Mammary epithelial cell (primary cell): ENCODE measurements at regions of chr10 and their contacts with region 1.

Region 1: DNA sequence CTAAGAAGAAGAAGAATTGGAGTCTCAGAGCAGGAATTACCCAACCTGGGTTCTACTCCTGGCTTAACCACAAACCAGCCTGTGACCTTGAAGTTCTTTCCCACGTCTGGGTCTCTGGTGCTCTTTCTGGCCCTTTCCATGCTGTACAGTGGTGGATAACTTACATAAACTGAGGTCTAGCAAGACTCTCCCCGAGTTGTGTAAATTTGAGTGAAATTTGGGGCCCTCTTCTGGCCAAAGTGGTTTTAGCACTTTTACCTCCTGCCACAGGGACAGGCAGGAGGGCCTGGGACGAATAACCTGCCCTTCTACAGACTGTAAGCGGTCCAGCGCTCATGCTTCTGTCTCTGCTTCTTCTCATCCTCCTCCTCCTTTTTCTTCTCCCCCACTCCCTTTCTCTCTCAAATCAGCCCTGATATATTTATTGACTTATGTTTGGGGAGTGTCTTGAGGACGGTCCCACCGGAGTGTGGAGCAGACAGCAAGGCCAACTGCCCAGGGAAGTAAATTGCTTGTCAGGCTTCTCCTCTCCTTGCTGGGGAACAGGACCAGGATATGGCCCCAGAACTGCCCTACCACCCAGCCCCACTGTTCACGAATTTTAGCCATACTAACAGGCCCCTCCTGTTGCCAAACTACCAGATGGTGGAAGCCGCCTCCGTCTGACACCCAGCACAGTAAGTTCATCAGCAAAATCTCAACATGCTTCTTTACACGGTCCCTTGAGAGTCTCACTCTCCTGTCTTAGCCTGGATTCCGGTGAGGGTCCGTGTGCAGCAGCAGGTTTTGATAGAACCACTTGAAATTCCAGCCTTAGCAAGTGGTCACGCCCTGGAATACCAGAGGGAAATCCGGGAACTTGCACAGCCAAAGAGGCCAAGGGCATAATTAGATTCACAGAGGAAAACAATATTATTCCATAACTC is 4.0 kb upstream of the SH3PXD2A start:
- DNase-seq: peak; percentile 69
- H3K4me3 ChIP-seq: no peak overlapping the region
- H3K27ac ChIP-seq: peak overlapping the region; percentile 22
- H3K4me1 ChIP-seq: peaks cover 45% of the 10 kb centered on the region
- H3K27me3 ChIP-seq: no peaks in the 10 kb centered on the region
- CTCF ChIP-seq: peak; percentile 64 to 69

Region 2: DNA sequence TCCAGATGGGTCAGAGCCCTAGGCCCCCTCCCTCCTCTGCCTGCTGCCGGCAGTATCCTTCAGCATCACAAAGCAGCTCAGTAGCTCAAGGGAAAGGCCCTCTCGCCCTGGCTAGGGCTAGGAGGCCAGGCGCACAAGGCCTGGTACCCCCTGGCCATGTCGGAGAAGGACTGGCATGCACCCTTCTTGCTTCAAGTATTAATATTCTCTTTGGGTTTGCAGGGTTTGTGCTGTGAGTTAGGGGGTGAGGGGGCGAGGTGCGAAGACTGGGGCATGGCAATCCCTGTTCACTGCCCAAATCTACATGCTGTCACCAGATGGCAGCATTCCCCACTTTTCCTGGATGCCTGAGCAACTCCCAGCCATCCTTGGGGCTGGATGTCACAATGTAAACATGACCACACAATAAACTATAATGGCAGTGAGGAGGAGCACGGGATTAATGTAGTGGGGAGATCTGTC is 260.7 kb before region 1 on chr10:
- CTCF ChIA-PET with region 1: no interaction called
- dilution Hi-C with region 1: no loop called
- in situ Hi-C with region 1: no loop called
- intact Hi-C with region 1: loop called (anchors 1 kb)
- DNase-seq: peak; percentile 32
- H3K4me3 ChIP-seq: no peak overlapping the region
- H3K27ac ChIP-seq: no peak overlapping the region
- H3K4me1 ChIP-seq: no peaks in the 10 kb centered on the region
- H3K27me3 ChIP-seq: no peaks in the 10 kb centered on the region
- CTCF ChIP-seq: peak; percentile 40 to 59

Region 3: GRCh38 chr10:103696411-103697145 is 162.8 kb before region 1 on chr10:
- CTCF ChIA-PET with region 1: no interaction called
- dilution Hi-C with region 1: no loop called
- in situ Hi-C with region 1: no loop called
- intact Hi-C with region 1: no loop called
- DNase-seq: peak; percentile 93
- H3K4me3 ChIP-seq: no peak overlapping the region
- H3K27ac ChIP-seq: peak overlapping the region; percentile 41
- H3K4me1 ChIP-seq: peaks cover 62% of the 10 kb centered on the region
- H3K27me3 ChIP-seq: no peaks in the 10 kb centered on the region
- CTCF ChIP-seq: peak; percentile 32 to 41

Region 4: DNA sequence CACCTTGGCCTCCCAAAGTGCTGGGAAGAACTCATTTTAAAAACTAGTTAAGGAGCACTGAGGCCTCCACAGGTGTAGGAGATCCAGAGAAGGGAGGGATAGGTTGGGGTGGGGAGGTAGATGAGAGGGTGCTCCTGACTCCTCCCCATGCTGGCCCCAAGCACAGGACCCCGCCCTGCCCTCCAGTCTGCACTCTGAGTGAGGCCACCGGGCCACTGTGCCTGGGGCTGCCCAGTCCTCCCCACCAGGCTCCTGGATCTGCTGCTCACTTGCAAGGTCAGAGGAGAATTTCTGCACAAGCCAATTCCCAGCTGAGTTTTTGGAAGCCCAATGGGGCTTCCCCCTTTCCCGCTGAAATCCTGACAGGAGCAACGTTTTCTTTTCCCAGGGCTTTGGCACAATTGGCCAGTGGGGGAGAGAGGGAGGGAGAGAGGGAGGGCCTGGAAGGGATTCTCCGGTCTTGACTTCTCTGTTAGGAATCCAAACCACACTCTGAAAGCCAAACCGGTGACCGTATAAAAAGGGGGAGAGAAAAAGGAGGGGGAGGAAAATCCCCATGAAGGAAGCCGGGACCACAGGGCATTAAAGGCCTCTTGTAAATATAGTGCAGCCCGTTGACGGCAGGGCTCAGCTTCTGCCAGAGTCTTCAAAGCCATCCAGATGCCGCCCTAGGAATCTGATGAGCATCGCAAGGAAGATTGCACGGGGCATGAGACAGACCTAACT is 120.2 kb before region 1 on chr10:
- CTCF ChIA-PET with region 1: interaction called, 5 read pairs
- dilution Hi-C with region 1: loop called (anchors 25 kb)
- in situ Hi-C with region 1: no loop called
- intact Hi-C with region 1: no loop called
- DNase-seq: peak; percentile 92
- H3K4me3 ChIP-seq: no peak overlapping the region
- H3K27ac ChIP-seq: peak overlapping the region; percentile 61
- H3K4me1 ChIP-seq: peaks cover 76% of the 10 kb centered on the region
- H3K27me3 ChIP-seq: no peaks in the 10 kb centered on the region
- CTCF ChIP-seq: no peak

Region 5: DNA sequence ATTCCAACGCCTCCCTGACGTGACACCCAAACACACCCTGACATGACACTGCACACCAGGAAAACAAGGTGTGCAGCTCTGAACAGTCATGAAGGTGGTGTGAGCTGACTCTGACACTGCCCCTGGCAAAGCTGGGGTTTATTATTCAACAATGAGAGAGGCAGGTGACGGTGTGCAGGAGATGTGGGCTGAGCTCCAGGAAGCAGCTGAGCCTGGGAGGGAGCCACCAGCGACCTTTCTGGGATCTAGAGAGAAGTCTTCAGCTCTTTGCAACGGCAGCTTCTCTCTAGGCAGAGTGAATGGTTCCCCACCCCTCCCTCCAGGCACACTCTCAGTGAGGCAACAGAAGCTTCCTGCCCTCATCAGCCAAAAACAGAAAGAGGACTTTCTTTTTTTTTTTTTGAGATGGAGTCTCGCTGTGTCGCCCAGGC is 69.6 kb before region 1 on chr10:
- CTCF ChIA-PET with region 1: no interaction called
- dilution Hi-C with region 1: no loop called
- in situ Hi-C with region 1: loop called in 1 of 2 experiments (anchors 5 kb)
- intact Hi-C with region 1: no loop called
- DNase-seq: peak; percentile 65
- H3K4me3 ChIP-seq: no peak overlapping the region
- H3K27ac ChIP-seq: peak overlapping the region; percentile 68
- H3K4me1 ChIP-seq: peaks cover 68% of the 10 kb centered on the region
- H3K27me3 ChIP-seq: no peaks in the 10 kb centered on the region
- CTCF ChIP-seq: no peak

Region 6: GRCh38 chr10:103870516-103870915 is 11.1 kb after region 1 on chr10:
- CTCF ChIA-PET with region 1: no interaction called
- dilution Hi-C with region 1: no loop called
- in situ Hi-C with region 1: no loop called
- intact Hi-C with region 1: loop called (anchors 1 kb)
- DNase-seq: peak; percentile 95
- H3K4me3 ChIP-seq: peak overlapping the region in 2 of 3 experiments; percentile 4 to 21
- H3K27ac ChIP-seq: peak overlapping the region; percentile 99
- H3K4me1 ChIP-seq: peaks cover 45% of the 10 kb centered on the region
- H3K27me3 ChIP-seq: no peaks in the 10 kb centered on the region
- CTCF ChIP-seq: peak; percentile 19 to 38